ENCODE measurements at regions of chr15 and their contacts with region 1.

Region 1: GRCh38 chr15:50354838-50355618 is at the start of gene GABPB1:
- DNase-seq: peak; percentile 94
- ATAC-seq: peak; percentile 42
- H3K4me3 Mint-ChIP-seq: peak within 1 kb of the TSS; percentile 99
- H3K27ac Mint-ChIP-seq: peak within 1 kb of the TSS; percentile 100
- H3K4me1 Mint-ChIP-seq: peaks cover 44% of the 10 kb centered on the region
- H3K27me3 Mint-ChIP-seq: no peaks in the 10 kb centered on the region
- total RNA-seq, gene GABPB1: 46.3 to 53.4 TPM

Region 2: GRCh38 chr15:49155110-49155833 is 1199.8 kb before region 1 on chr15 and contains the start of gene COPS2:
- CTCF ChIA-PET with region 1: no interaction called
- POLR2A ChIA-PET with region 1: interaction called, 3 read pairs
- intact Hi-C with region 1: loop called (anchors 1 kb)
- DNase-seq: peak; percentile 95
- ATAC-seq: peak; percentile 96
- H3K4me3 Mint-ChIP-seq: peak within 1 kb of the TSS; percentile 96
- H3K27ac Mint-ChIP-seq: peak within 1 kb of the TSS; percentile 94
- H3K4me1 Mint-ChIP-seq: peaks cover 37% of the 10 kb centered on the region
- H3K27me3 Mint-ChIP-seq: no peaks in the 10 kb centered on the region
- total RNA-seq, gene COPS2: 82.6 to 95.9 TPM

Region 3: GRCh38 chr15:50260969-50261496 is 94.0 kb before region 1 on chr15:
- CTCF ChIA-PET with region 1: interaction called, 4 read pairs
- POLR2A ChIA-PET with region 1: interaction called, 12 read pairs
- intact Hi-C with region 1: loop called (anchors 1 kb)
- DNase-seq: no peak
- ATAC-seq: peak; percentile 17
- H3K4me3 Mint-ChIP-seq: peak overlapping the region; percentile 37
- H3K27ac Mint-ChIP-seq: peak overlapping the region; percentile 95
- H3K4me1 Mint-ChIP-seq: peaks cover 69% of the 10 kb centered on the region
- H3K27me3 Mint-ChIP-seq: no peaks in the 10 kb centered on the region

Region 4: DNA sequence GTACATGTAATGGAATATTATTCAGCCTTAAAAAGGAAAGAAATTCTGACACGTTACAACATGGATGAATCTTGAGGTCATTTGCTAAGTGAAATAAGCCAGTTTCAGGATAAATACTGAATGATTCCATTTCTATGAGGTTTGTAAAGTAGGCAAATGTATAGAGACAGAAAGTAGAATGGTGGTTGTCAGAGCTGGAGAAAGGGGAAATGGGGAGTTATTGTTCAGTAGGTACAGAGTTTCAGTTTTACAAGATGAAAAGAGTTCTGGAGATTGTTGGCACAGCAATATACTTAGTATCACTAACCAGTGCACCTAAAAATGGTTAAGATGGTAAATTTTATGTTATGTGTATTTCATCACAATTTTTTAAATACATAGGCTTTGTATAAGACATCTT is 129.8 kb after region 1 on chr15:
- CTCF ChIA-PET with region 1: no interaction called
- POLR2A ChIA-PET with region 1: no interaction called
- intact Hi-C with region 1: loop called (anchors 2 to 10 kb)
- DNase-seq: no peak
- ATAC-seq: peak; percentile 52
- H3K4me3 Mint-ChIP-seq: no peak overlapping the region
- H3K27ac Mint-ChIP-seq: no peak overlapping the region
- H3K4me1 Mint-ChIP-seq: peaks cover 25% of the 10 kb centered on the region
- H3K27me3 Mint-ChIP-seq: no peaks in the 10 kb centered on the region

Region 5: GRCh38 chr15:50765195-50765973 is 410.4 kb after region 1 on chr15 and contains the start of gene SPPL2A:
- CTCF ChIA-PET with region 1: no interaction called
- POLR2A ChIA-PET with region 1: no interaction called
- intact Hi-C with region 1: loop called (anchors 1 to 2 kb)
- DNase-seq: peak; percentile 96
- ATAC-seq: peak; percentile 90
- H3K4me3 Mint-ChIP-seq: peak within 1 kb of the TSS; percentile 82
- H3K27ac Mint-ChIP-seq: peak within 1 kb of the TSS; percentile 99
- H3K4me1 Mint-ChIP-seq: peaks cover 50% of the 10 kb centered on the region
- H3K27me3 Mint-ChIP-seq: no peaks in the 10 kb centered on the region
- total RNA-seq, gene SPPL2A: 53.1 to 66.1 TPM

Measured in activated CD4-positive, alpha-beta T cell treated with anti-CD3 and anti-CD28 coated beads for 36 hours (primary cell).